ENCODE measurements at regions of chr7 and their contacts with region 1.

Region 1: DNA sequence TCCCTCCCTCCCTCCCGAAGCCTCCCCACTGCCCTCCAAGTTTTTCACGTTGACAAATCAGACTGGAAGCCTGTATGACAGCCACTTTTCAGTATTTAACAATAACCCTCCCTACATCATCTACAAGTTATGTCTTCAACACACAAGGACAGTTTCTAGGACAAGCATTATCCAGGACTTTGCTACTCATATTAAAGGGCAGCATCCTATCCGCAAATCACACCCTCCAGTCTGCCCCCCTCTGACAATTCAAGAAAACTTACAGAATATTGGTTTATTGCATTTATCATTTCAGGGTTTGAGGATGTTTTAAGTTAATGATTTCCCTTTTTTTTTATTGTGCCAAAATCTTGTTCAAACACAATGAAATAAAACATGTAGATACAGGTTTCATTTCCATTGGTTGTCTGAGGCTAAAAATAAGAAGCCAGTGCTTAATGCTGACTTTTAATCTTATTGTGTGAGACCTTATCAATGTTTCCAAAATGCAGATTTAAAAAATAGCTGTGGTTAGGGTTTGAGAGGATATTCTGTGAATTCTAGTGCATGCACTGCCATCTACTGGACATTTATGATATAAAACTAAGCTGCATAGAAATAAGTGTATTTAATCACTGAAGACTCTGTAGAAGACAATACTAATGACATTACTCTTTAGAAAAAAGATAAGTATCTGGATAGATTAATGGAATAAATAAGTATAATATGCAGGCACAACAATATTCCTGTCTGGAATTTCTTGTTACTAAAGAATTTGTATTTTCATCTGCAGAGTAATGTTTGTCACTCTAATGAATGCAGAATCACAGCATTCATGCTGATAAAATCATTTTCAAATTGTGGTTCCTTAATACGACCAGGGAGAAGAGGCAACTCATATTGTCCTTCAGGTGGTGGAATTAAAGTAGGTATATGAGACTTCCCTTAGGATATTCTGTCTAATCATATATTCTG is 64.1 kb downstream of the CAV1 start:
- DNase-seq: peak in 1 of 2 donors; percentile 81
- H3K4me3 ChIP-seq: no peak overlapping the region
- H3K27ac ChIP-seq: peak overlapping the region in 3 of 5 donors; percentile 37 to 53 (median 47)
- H3K4me1 ChIP-seq: peaks cover 12 to 43% (median 24%) of the 10 kb centered on the region in 4 donors
- H3K27me3 ChIP-seq: no peaks in the 10 kb centered on the region
- CTCF ChIP-seq: peak in 5 of 7 experiments; percentile 34 to 68 (median 60)
- EP300 ChIP-seq: no peak
- POLR2A ChIP-seq: no peak

Region 2: DNA sequence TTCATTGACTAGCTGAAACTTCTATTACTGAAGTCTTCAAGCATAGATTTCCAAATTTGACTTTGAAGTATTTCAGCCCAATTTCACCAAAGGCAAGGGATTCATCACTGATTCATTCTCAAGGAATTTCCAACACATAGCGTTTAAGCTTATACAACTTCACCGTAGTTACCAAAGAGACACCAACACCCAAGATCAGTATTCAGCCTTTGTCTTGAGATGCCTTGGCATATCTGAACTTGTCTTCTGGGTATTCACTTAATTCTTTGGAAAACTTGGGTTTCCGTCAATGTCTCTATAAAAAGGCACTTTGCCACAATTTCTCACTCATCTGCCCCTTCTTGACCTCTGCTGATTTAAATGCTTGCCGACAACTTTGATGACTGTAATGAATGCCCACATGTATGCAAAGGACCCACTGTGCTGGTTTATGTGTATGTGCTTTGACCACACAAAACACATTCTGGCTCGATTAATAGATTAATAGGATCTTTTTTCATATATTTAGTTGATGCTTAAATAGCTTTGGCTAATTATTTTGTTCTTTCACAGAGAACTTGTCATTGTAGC is 329.0 kb before region 1 on chr7:
- intact Hi-C with region 1: loop called (anchors 5 kb)
- DNase-seq: no peak
- H3K4me3 ChIP-seq: no peak overlapping the region
- H3K27ac ChIP-seq: no peak overlapping the region
- H3K4me1 ChIP-seq: peaks cover 0 to 8% (median 4%) of the 10 kb centered on the region in 4 donors
- H3K27me3 ChIP-seq: no peaks in the 10 kb centered on the region
- CTCF ChIP-seq: no peak
- EP300 ChIP-seq: no peak
- POLR2A ChIP-seq: no peak

Region 3: DNA sequence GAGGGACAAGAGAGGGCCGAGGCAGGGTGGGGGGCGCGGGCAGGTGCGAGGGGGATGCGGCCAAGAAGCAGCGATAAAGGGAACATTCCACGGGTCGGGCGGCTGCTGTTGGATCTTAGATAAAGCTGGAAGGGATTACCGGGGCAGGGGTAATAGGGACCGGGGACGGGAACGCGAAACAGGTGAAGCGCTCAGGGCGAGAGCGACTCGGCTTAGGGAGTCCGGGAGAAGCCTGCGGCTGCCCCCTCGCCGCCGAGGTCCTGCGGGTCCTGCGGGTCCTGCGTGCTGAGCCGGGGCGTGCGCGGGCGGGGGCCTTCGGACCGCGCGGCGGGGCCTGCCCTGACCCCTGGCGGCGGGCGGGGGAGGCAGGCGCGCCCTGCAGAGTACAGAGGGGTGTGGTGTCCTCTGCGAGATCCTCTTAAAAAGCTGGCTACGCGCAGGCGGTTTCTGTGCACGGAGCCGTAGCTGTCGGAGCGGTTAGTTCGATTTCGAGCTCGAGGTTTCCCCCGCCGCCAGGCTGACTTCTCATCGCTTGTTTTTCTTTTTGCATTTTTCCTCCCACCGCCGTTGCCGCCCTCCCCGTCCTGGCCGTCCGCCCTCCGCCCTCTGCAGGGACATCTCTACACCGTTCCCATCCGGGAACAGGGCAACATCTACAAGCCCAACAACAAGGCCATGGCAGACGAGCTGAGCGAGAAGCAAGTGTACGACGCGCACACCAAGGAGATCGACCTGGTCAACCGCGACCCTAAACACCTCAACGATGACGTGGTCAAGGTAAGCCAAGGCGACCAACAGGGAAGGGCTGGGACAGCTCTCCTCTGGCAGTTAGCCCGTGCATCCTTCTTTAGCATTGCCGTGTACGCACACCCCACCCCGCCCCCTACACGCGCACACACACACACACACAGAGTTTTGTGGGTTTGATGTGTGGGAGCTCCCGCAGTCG is 62.7 kb before region 1 on chr7:
- intact Hi-C with region 1: loop called (anchors 10 kb)
- DNase-seq: peak; percentile 70 to 92
- H3K4me3 ChIP-seq: peak overlapping the region; percentile 69 to 72 (median 70)
- H3K27ac ChIP-seq: peak overlapping the region; percentile 87 to 94 (median 90)
- H3K4me1 ChIP-seq: peaks cover 0 to 52% (median 25%) of the 10 kb centered on the region in 4 donors
- H3K27me3 ChIP-seq: peaks cover 0 to 31% (median 11%) of the 10 kb centered on the region in 3 donors
- CTCF ChIP-seq: peak in 5 of 7 experiments; percentile 26 to 94 (median 76)
- EP300 ChIP-seq: no peak
- POLR2A ChIP-seq: no peak

Region 4: DNA sequence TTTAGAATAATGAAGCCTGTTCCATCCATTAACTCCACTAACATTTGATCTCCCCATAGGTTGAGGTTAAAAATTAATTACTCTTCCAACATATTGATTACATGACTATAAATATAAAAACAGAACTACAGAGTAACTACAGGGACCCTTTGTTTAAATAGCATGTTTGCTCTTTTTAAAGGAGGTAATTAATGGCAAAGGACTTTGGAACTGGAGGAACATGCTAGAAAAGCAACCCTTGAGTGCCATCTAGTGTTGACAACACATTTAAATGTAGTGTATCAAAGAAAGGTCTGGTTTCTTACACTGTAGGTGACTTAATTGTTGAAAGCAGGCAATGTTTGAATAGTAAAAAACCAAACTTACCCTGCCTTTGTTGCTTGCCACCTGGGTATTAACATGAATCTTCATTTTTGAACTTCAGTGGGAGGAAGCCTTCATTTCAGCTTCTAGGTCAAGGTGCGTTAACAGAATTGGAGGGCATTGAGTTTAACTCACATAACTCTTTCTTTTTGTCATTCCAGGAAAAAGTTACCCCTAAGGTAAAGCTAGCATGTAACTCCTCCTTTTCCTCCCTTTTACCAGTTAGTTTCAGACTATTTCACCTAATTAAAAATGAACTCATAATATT is 220.8 kb after region 1 on chr7:
- intact Hi-C with region 1: loop called (anchors 10 kb)
- DNase-seq: peak in 1 of 2 donors; percentile 93
- H3K4me3 ChIP-seq: no peak overlapping the region
- H3K27ac ChIP-seq: peak overlapping the region in 4 of 5 donors; percentile 35 to 64 (median 58)
- H3K4me1 ChIP-seq: peaks cover 0 to 45% (median 26%) of the 10 kb centered on the region in 4 donors
- H3K27me3 ChIP-seq: no peaks in the 10 kb centered on the region
- CTCF ChIP-seq: peak in 4 of 7 experiments; percentile 27 to 73 (median 40)
- EP300 ChIP-seq: no peak
- POLR2A ChIP-seq: no peak

Measured in stomach (tissue), 19 donors.